IMR-90 (cell line): ENCODE measurements at regions of chr1 and their contacts with region 1.

Region 1: DNA sequence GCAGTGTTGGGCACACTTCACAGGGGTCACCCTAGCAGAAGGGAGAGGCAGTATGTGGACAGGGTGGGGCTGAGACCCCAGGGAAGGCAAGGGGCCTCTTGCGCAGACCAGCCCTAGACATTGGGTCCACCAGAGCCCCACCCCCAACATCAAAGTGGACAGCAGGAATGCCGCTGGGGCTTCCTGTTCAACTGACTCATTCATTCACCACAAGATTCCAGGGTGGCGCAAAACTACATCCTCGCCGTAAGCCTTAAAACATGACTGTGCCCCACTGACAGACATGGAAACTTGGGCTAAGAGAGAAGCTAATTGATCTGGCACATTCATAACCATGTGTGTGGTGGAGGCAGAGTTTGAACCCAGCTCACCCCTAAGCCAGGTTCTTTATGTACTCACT is 14.0 kb downstream of the COL16A1 start:
- DNase-seq: peak; percentile 96
- ATAC-seq: peak; percentile 88
- H3K4me3 ChIP-seq: no peak overlapping the region
- H3K27ac ChIP-seq: peak overlapping the region; percentile 88
- H3K4me1 ChIP-seq: peaks cover 44% of the 10 kb centered on the region
- H3K27me3 ChIP-seq: no peaks in the 10 kb centered on the region
- CTCF ChIP-seq: 0 out of 2 replicates have a peak, but pooled peaks have one; percentile 2
- POLR2A ChIP-seq: peak; percentile 55
- RAD21 ChIP-seq: peak; percentile 36

Region 2: GRCh38 chr1:31715087-31715872 is 25.5 kb after region 1 on chr1:
- CTCF ChIA-PET with region 1: no interaction called
- POLR2A ChIA-PET with region 1: no interaction called
- dilution Hi-C with region 1: no loop called
- in situ Hi-C with region 1: no loop called
- intact Hi-C with region 1: loop called (anchors 2 kb)
- DNase-seq: peak; percentile 81
- ATAC-seq: peak; percentile 90
- H3K4me3 ChIP-seq: peak overlapping the region; percentile 14
- H3K27ac ChIP-seq: peak overlapping the region; percentile 69
- H3K4me1 ChIP-seq: peaks cover 32% of the 10 kb centered on the region
- H3K27me3 ChIP-seq: peaks cover 4% of the 10 kb centered on the region; the same call in 1 of the 2 replicates
- CTCF ChIP-seq: peak; percentile 83
- POLR2A ChIP-seq: no peak; the same call in 1 of the 2 replicates
- RAD21 ChIP-seq: peak; percentile 55

Region 3: GRCh38 chr1:32470991-32471694 is 781.3 kb after region 1 on chr1:
- CTCF ChIA-PET with region 1: no interaction called
- POLR2A ChIA-PET with region 1: no interaction called
- dilution Hi-C with region 1: no loop called
- in situ Hi-C with region 1: no loop called
- intact Hi-C with region 1: no loop called
- DNase-seq: no peak
- ATAC-seq: no peak
- H3K4me3 ChIP-seq: no peak overlapping the region
- H3K27ac ChIP-seq: no peak overlapping the region
- H3K4me1 ChIP-seq: no peaks in the 10 kb centered on the region; the same call in 1 of the 2 replicates
- H3K27me3 ChIP-seq: peaks cover 27% of the 10 kb centered on the region
- CTCF ChIP-seq: no peak
- POLR2A ChIP-seq: no peak
- RAD21 ChIP-seq: no peak